Activated CD4-positive, alpha-beta T cell treated with anti-CD3 and anti-CD28 coated beads for 36 hours (primary cell): ENCODE measurements at regions of chr10 and their contacts with region 1.

Region 1: GRCh38 chr10:96334616-96335526 is 23.9 kb downstream of the OPALIN start:
- DNase-seq: peak; percentile 12
- ATAC-seq: no peak
- H3K4me3 Mint-ChIP-seq: no peak overlapping the region
- H3K27ac Mint-ChIP-seq: no peak overlapping the region
- H3K4me1 Mint-ChIP-seq: peaks cover 21% of the 10 kb centered on the region
- H3K27me3 Mint-ChIP-seq: peaks cover 4% of the 10 kb centered on the region

Region 2: DNA sequence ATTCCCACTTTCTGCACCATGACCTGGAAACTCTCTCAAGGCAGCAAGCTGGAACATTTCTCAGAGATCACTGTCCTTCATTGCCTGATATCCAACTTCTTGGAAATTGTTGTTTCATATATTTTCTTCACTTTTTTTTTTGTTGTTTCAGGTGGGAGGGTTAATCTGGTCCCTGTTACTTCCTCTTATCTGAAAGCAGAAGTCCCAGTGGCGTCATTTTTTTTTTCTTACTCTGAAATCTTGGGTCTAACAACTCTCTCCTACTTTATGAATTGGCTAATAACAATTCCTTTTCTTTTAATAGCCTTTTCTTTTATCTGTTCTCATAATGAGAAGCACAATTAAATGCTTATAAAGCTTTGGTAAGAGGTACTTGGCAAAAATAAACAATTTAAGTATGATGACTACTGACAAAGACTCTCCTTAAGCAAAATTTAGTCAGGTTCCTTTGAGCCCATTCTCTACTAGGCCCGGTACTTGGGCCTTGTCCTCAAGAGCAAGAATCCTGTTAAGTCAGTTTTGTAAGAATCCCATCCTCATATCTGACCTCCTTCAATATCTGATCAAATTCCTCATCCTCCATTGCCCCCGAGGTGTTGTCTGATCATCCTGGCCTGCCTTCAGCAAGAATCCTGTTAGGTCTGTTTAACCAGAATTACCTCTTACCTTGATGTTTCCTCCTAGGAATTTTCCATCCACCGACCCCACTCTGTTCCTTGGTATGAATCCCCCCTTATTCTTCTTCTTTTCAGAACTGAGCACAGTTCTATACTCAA is 438.6 kb before region 1 on chr10:
- CTCF ChIA-PET with region 1: no interaction called
- POLR2A ChIA-PET with region 1: no interaction called
- intact Hi-C with region 1: no loop called
- DNase-seq: no peak
- ATAC-seq: no peak
- H3K4me3 Mint-ChIP-seq: no peak overlapping the region
- H3K27ac Mint-ChIP-seq: no peak overlapping the region
- H3K4me1 Mint-ChIP-seq: no peaks in the 10 kb centered on the region
- H3K27me3 Mint-ChIP-seq: no peaks in the 10 kb centered on the region

Region 3: GRCh38 chr10:96319754-96320474 is 15.0 kb before region 1 on chr10:
- CTCF ChIA-PET with region 1: interaction called, 24 read pairs
- POLR2A ChIA-PET with region 1: no interaction called
- intact Hi-C with region 1: no loop called
- DNase-seq: no peak
- ATAC-seq: no peak
- H3K4me3 Mint-ChIP-seq: no peak overlapping the region
- H3K27ac Mint-ChIP-seq: no peak overlapping the region
- H3K4me1 Mint-ChIP-seq: no peaks in the 10 kb centered on the region
- H3K27me3 Mint-ChIP-seq: peaks cover 10% of the 10 kb centered on the region

Region 4: GRCh38 chr10:96416643-96417042 is 81.8 kb after region 1 on chr10:
- CTCF ChIA-PET with region 1: no interaction called
- POLR2A ChIA-PET with region 1: no interaction called
- intact Hi-C with region 1: no loop called
- DNase-seq: no peak
- ATAC-seq: no peak
- H3K4me3 Mint-ChIP-seq: no peak overlapping the region
- H3K27ac Mint-ChIP-seq: no peak overlapping the region
- H3K4me1 Mint-ChIP-seq: no peaks in the 10 kb centered on the region
- H3K27me3 Mint-ChIP-seq: peaks cover 8% of the 10 kb centered on the region